ENCODE measurements at regions of chr20 and their contacts with region 1.

Region 1: GRCh38 chr20:16573001-16573965 is at the start of gene KIF16B:
- DNase-seq: peak; percentile 95
- ATAC-seq: peak; percentile 96
- total RNA-seq, gene KIF16B: 18.3 TPM

Region 2: GRCh38 chr20:16729565-16730456 is 156.5 kb after region 1 on chr20 and contains the start of gene SNRPB2:
- intact Hi-C with region 1: loop called (anchors 5 kb)
- DNase-seq: peak; percentile 96
- ATAC-seq: peak; percentile 100
- total RNA-seq, gene SNRPB2: 28.5 TPM